PC-9 (cell line): ENCODE measurements at regions of chr10 and their contacts with region 1.

Region 1: DNA sequence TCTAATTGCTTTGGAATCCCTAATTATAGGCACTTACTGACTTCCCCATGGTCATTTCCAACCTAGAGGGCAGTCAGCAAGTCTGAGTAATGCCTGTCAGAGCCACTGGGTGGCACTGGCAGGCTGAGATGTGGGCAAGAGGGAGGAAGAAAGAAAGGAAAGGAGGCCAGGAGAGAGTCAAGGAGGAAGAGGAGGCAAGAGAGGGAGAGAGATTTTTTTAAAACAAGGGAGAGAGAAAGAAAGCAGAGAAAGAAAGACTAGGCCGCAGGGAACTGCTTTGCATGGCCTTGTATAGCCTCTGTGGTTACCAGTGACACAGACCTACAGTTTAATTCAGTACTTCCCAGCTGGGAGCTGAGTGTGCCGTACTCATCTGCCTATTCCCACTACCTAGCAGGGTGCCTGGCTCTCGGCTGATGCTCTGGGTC is 210.4 kb upstream of the ADO start:
- DNase-seq: peak in 1 of 2 experiments; percentile 45
- H3K4me3 ChIP-seq: no peak overlapping the region
- H3K27ac ChIP-seq: no peak overlapping the region
- H3K4me1 ChIP-seq: no peaks in the 10 kb centered on the region
- H3K27me3 ChIP-seq: no peaks in the 10 kb centered on the region
- CTCF ChIP-seq: peak; percentile 97

Region 2: DNA sequence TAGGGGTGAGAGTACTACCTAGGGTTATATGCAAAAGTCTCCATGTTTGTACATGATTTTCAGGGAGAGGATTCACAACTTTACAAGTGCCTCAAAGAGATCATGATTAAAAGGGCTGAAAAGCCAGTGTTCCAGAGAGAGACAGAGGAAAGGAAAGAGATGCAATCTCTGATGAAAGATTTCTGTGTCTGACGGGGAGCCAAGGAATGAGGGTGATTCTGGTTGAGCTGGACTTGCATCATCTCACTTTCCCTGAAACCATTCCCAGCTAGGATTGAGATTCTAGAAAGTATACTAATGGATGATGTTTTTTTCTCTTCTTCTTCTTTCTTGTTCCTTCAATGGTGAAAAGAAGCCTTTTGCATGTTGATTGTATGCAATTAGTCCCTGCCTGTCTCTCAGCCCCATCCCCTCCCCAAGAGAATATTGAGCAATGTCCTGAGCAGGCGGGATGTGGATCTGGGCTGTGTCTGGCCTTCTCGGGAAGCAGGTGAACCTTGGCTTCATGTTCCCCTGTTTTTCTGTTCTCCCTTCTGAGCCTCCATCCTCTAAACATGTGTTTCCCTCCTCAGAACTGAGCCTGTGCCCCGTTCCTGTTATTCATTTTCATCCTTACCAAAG is 33.8 kb before region 1 on chr10:
- CTCF ChIA-PET with region 1: no interaction called
- POLR2A ChIA-PET with region 1: no interaction called
- intact Hi-C with region 1: no loop called
- DNase-seq: no peak
- H3K4me3 ChIP-seq: no peak overlapping the region
- H3K27ac ChIP-seq: no peak overlapping the region
- H3K4me1 ChIP-seq: no peaks in the 10 kb centered on the region
- H3K27me3 ChIP-seq: no peaks in the 10 kb centered on the region
- CTCF ChIP-seq: no peak

Region 3: DNA sequence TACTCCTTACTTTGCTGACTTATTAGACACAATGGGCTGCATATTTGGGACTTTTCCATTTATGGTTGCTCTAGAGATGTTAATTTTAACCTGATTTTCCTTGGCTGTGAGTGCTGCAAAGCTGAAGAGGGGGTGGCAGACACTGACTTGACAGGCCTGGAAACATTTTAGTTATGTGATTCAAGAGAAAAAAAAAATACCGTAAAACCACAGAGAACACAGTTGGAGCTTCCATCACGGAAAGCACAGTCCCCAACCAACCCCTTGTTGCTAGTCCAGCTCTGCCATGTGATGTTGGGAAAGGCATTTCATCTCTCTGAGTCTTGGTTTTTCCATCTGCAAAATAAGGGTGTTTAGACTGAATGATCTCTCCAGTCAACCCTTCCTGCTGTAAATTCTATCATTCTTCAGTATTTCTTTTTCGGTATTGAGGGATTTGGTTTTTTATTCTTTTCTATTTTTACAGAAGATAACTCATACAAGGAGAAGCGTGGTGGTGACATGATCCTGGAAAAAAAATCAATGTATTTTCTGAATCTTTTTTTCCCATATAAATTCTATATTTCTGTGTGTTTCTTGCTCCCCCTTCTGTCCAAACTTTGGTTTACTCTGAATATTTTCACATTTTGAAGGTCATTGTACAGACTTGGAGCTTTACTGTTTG is 1173.2 kb after region 1 on chr10:
- CTCF ChIA-PET with region 1: no interaction called
- POLR2A ChIA-PET with region 1: no interaction called
- intact Hi-C with region 1: loop called (anchors 10 kb)
- DNase-seq: no peak
- H3K4me3 ChIP-seq: no peak overlapping the region
- H3K27ac ChIP-seq: no peak overlapping the region
- H3K4me1 ChIP-seq: no peaks in the 10 kb centered on the region
- H3K27me3 ChIP-seq: no peaks in the 10 kb centered on the region
- CTCF ChIP-seq: peak; percentile 71